A549 (cell line): ENCODE measurements at regions of chr12 and their contacts with region 1.

Region 1: DNA sequence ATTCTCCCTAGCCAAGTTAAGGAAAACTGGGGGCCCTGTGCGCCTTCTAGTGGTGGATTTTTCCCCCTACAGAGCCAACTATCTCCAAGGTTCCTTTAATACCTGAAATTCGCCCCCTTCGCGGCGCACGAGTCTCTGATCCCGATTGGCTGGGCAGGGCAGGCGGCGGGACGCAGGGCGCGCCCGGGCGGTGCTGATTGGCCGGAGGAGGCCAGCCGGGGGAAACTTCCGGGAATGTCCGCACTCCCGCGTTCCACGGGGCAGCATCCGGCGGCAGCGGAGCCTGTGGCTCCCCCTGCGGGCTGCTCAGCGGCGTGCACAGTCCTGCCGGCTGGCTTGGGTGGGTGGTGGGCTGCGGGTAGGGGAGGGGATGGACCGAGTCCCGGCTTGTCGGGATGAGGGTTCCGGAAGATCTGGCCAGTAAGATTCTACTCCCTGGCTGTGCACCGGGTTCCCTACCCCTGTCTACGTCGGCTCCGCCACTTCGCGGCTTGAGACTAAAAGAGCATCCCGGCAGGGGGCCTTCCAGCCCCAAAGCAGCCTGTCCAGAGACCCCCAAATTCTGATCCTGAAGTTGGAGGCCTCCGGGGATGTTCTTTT is at the start of gene NABP2:
- DNase-seq: peak; percentile 99
- ATAC-seq: peak; percentile 84 to 89
- H3K4me3 ChIP-seq: peak within 1 kb of the TSS; percentile 66
- H3K27ac ChIP-seq: peak within 1 kb of the TSS; percentile 80 to 94
- H3K4me1 ChIP-seq: peaks cover 26% of the 10 kb centered on the region
- CTCF ChIP-seq: peak; percentile 95
- EP300 ChIP-seq: no peak
- POLR2A ChIP-seq: peak; percentile 61
- RAD21 ChIP-seq: peak; percentile 57 to 73
- polyA plus RNA-seq, gene NABP2: 86.1 and 86.7 TPM in 2 replicates

Region 2: GRCh38 chr12:56127888-56128669 is 96.1 kb before region 1 on chr12 and contains the start of gene ESYT1:
- CTCF ChIA-PET with region 1: interaction called, 4 read pairs
- POLR2A ChIA-PET with region 1: interaction called, 10 read pairs
- DNase-seq: peak; percentile 99 to 100
- ATAC-seq: peak; percentile 83 to 95
- H3K4me3 ChIP-seq: peak within 1 kb of the TSS; percentile 76
- H3K27ac ChIP-seq: peak within 1 kb of the TSS; percentile 87 to 89
- H3K4me1 ChIP-seq: peaks cover 25% of the 10 kb centered on the region
- CTCF ChIP-seq: no peak
- EP300 ChIP-seq: no peak
- POLR2A ChIP-seq: peak; percentile 69
- RAD21 ChIP-seq: no peak
- polyA plus RNA-seq, gene ESYT1: 72.4 and 91.6 TPM in 2 replicates

Region 3: GRCh38 chr12:56206457-56207166 is 17.6 kb before region 1 on chr12:
- CTCF ChIA-PET with region 1: interaction called, 67 read pairs
- POLR2A ChIA-PET with region 1: interaction called, 34 read pairs
- DNase-seq: peak; percentile 72 to 74
- ATAC-seq: peak; percentile 94 to 96
- H3K4me3 ChIP-seq: no peak overlapping the region
- H3K27ac ChIP-seq: no peak overlapping the region
- H3K4me1 ChIP-seq: no peaks in the 10 kb centered on the region
- CTCF ChIP-seq: peak; percentile 61
- EP300 ChIP-seq: no peak
- POLR2A ChIP-seq: no peak
- RAD21 ChIP-seq: peak; percentile 45 to 68; a peak in 4 of 5 replicates

Region 4: GRCh38 chr12:56253091-56253490 is 28.9 kb after region 1 on chr12:
- CTCF ChIA-PET with region 1: interaction called, 16 read pairs
- POLR2A ChIA-PET with region 1: interaction called, 21 read pairs
- DNase-seq: no peak
- ATAC-seq: no peak
- H3K4me3 ChIP-seq: no peak overlapping the region
- H3K27ac ChIP-seq: no peak overlapping the region
- H3K4me1 ChIP-seq: peaks cover 15% of the 10 kb centered on the region
- CTCF ChIP-seq: no peak
- EP300 ChIP-seq: no peak
- POLR2A ChIP-seq: no peak
- RAD21 ChIP-seq: no peak

Region 5: GRCh38 chr12:56266693-56267442 is 42.7 kb after region 1 on chr12 and contains the start of gene COQ10A:
- CTCF ChIA-PET with region 1: interaction called, 6 read pairs
- POLR2A ChIA-PET with region 1: interaction called, 10 read pairs
- DNase-seq: peak; percentile 94 to 98
- ATAC-seq: peak; percentile 91 to 94
- H3K4me3 ChIP-seq: peak within 1 kb of the TSS; percentile 47
- H3K27ac ChIP-seq: peak within 1 kb of the TSS; percentile 77 to 93
- H3K4me1 ChIP-seq: peaks cover 20% of the 10 kb centered on the region
- CTCF ChIP-seq: peak; percentile 51
- EP300 ChIP-seq: no peak
- POLR2A ChIP-seq: peak; percentile 96
- RAD21 ChIP-seq: peak; percentile 36 to 42; a peak in 3 of 5 replicates
- polyA plus RNA-seq, gene COQ10A: 40.9 and 41.2 TPM in 2 replicates